A549 (cell line): ENCODE measurements at regions of chr12 and their contacts with region 1.

Region 1: DNA sequence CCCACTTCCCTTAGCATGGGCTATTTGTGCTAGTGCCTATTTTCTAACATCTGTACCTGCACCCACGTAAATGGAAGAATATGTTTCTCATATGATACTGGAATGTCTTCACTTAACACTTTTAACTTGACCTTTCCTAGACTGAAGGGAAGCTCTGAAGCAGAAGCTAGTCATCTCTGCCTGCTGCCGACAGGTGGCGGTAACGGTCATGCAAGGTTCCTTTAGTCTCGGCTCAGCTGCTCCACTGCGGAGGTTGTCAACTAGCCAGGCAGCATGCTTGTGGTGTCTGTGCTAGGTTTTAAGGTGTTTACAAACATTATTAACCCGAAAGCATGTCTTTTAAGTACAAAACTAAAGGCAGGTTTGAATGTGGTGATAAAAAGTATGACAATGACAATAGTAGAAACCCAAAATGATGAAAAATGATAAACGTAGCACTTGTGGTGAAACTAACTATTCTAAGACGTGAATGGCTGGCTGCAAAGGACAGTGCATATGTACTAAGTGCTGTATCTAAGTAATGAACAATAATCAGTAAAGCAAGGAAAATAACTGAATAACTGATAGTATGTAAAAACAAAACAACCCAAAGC is 117.2 kb downstream of the GRIN2B start:
- DNase-seq: peak; percentile 65 to 88
- ATAC-seq: peak; percentile 96 to 97
- H3K4me3 ChIP-seq: no peak overlapping the region
- H3K27ac ChIP-seq: no peak overlapping the region
- H3K4me1 ChIP-seq: peaks cover 19% of the 10 kb centered on the region
- CTCF ChIP-seq: peak; percentile 90
- EP300 ChIP-seq: no peak
- POLR2A ChIP-seq: no peak
- RAD21 ChIP-seq: peak; percentile 82 to 90

Region 2: GRCh38 chr12:13843841-13844240 is 20.3 kb before region 1 on chr12:
- CTCF ChIA-PET with region 1: interaction called, 12 read pairs
- POLR2A ChIA-PET with region 1: interaction called, 3 read pairs
- DNase-seq: no peak
- ATAC-seq: no peak
- H3K4me3 ChIP-seq: no peak overlapping the region
- H3K27ac ChIP-seq: no peak overlapping the region
- H3K4me1 ChIP-seq: no peaks in the 10 kb centered on the region
- CTCF ChIP-seq: no peak
- EP300 ChIP-seq: no peak
- POLR2A ChIP-seq: no peak
- RAD21 ChIP-seq: no peak

Region 3: DNA sequence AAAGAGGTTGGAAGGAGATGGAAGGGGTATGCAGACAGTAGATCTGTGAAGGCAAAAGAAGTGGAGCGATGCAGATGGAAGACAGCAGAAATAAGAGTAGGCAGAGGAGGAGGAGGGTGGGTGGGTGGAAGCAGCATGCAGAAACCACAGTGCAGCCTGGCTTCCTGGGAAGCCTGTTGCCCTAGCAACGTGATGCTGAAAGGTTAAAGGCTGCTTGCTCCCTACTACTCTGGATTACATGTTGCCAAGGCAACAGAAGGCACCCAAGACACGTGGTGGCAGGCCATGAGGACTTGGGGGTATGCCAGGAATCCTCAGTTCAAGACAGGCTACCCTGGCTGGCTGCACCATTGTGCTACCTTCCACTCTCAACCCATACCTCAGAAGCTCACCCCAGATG is 12.3 kb before region 1 on chr12:
- CTCF ChIA-PET with region 1: interaction called, 21 read pairs
- POLR2A ChIA-PET with region 1: no interaction called
- DNase-seq: peak in 1 of 2 experiments; percentile 14
- ATAC-seq: no peak; a peak in 1 of 6 replicates
- H3K4me3 ChIP-seq: no peak overlapping the region
- H3K27ac ChIP-seq: no peak overlapping the region
- H3K4me1 ChIP-seq: no peaks in the 10 kb centered on the region
- CTCF ChIP-seq: no peak
- EP300 ChIP-seq: no peak
- POLR2A ChIP-seq: no peak
- RAD21 ChIP-seq: no peak

Region 4: DNA sequence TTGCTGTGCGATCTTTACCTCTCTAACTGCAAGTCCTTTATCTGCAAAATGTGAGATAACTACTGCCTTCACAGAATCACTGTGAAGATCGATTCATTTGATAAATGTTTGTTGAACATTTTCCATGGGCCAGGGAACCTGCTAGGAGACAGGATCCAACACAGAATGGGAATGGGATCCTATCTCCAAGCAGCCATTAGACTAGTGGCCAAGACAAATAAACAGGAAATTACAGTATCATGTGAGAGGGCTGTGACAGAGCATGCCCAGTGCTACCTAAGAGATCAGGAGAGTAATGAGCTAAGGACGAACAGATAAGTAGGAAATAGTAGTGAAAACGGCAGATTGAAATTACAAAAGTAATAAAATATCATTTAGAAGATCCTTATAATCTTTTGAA is 11.6 kb after region 1 on chr12:
- CTCF ChIA-PET with region 1: interaction called, 42 read pairs
- POLR2A ChIA-PET with region 1: no interaction called
- DNase-seq: no peak
- ATAC-seq: peak in 1 of 2 experiments; percentile 48; a peak in 1 of 6 replicates
- H3K4me3 ChIP-seq: no peak overlapping the region
- H3K27ac ChIP-seq: no peak overlapping the region
- H3K4me1 ChIP-seq: peaks cover 19% of the 10 kb centered on the region; the same call in 1 of the 3 replicates
- CTCF ChIP-seq: no peak
- EP300 ChIP-seq: no peak
- POLR2A ChIP-seq: no peak
- RAD21 ChIP-seq: no peak

Region 5: GRCh38 chr12:13981990-13982389 is 117.8 kb after region 1 on chr12:
- CTCF ChIA-PET with region 1: interaction called, 22 read pairs
- POLR2A ChIA-PET with region 1: interaction called, 4 read pairs
- DNase-seq: peak; percentile 55 to 81
- ATAC-seq: peak; percentile 84 to 87
- H3K4me3 ChIP-seq: peak overlapping the region; percentile 61
- H3K27ac ChIP-seq: peak overlapping the region; percentile 76 to 89
- H3K4me1 ChIP-seq: peaks cover 16% of the 10 kb centered on the region; the same call in 2 of the 3 replicates
- CTCF ChIP-seq: peak; percentile 83
- EP300 ChIP-seq: no peak
- POLR2A ChIP-seq: no peak
- RAD21 ChIP-seq: peak; percentile 79 to 95